ENCODE measurements at regions of chr4 and their contacts with region 1.

Region 1: GRCh38 chr4:15479089-15479912 is 9.6 kb downstream of the CC2D2A start:
- DNase-seq: peak; percentile 15 to 90 (median 59)

Region 2: GRCh38 chr4:15649914-15650545 is 170.7 kb after region 1 on chr4:
- intact Hi-C with region 1: loop called (anchors 1 kb)
- DNase-seq: peak in 2 of 10 donors; percentile 27 to 34

Region 3: DNA sequence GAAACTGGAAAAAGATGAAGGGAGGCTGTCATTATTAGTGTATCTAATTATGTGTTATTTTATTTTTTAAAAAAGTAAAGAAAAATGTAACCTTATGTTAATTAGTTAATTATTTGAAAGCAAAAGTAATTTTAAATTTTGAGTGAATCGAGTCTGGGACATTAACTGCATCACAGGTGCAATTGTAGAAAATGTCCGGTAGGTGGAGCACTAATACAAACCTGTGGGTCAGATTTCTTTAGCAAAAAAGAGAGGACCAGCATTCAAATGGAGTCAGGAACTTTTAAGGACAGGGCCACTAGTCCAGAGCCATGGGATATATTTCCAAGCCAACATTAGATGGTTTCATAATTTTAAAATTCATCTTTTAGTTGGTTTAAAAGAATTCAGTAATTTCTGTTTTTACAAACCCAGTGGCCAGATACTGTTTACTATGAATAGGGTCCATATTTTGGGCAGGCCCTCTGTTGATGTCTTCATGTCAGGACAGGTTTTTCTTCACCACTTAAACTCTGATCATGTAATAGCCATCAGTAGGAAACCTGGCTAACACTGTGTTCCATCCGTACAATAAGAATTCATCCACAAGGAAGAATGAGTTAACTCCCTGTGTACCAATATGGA is 250.7 kb after region 1 on chr4:
- intact Hi-C with region 1: no loop called
- DNase-seq: no peak

Region 4: GRCh38 chr4:15882675-15883086 is 403.4 kb after region 1 on chr4:
- intact Hi-C with region 1: loop called (anchors 10 kb)
- DNase-seq: peak in 8 of 10 donors; percentile 13 to 91 (median 37)

Region 5: DNA sequence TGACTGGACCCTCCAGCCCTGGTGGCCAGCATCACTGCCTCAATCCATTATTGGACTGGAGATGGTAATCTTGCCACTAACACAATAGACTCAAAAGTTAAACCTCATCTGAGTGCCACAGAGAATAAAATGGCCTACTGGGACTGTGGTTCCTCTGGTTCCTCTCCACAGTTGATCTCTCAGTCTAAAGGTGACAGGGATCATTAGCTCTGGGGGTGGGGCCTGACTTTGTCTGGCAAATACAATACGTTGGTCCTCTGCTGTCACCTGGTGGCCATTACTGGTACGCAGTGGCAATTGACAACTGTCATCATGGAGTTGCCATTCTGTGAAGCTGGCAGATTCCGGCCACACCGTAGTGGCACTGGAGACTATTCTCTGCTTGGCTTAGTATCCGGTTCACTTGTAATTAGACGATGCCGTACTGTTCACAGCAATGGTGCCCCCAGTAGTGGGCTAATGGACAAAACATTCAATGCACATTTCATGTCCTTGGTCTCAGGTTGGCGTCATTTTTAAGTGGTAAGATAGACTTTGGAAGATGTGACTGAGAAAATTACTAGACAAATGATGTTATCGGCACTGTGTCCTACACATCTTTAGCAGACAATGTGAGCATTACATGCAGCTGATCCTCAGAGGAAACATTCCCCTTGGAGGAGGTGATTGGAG is 477.0 kb after region 1 on chr4:
- intact Hi-C with region 1: loop called (anchors 5 kb)
- DNase-seq: peak in 6 of 10 donors; percentile 39 to 92 (median 65)

Measured in posterior cingulate gyrus (tissue), 11 donors.